PC-9 (cell line): ENCODE measurements at regions of chr15 and their contacts with region 1.

Region 1: DNA sequence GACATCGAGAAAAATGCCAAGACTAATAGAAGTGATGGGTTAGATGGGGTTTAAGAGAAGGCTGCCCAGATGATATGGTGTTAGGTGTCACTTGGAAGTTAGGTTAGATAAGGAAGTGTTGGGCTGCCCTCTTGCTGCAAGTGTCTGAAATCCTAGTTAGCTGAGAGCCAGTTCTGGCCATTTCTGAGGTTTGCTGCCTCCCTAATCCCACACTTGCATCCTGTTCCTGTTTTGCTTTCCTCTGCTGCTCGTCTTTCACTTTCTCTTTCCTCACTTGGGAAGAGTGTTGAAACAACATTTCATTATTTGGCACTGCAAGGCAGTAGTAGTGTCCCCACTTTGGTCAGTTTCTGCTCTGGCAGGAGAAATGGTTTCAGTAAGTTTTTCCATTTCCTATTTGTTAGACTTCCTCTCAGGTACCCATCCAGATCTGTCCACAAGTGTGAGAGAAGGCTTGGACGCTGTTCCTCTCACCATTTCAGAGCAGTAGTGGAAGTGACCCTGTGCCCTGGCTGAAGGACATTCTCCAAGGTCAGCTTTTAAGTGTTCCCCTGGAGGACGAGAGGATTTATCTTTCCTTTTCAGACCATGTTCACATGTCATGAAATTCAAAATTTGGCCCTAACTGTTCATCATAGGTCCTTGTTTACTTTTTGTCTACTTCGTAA is 93.3 kb downstream of the ADAMTSL3 start:
- DNase-seq: peak in 1 of 2 experiments; percentile 27
- H3K4me3 ChIP-seq: no peak overlapping the region
- H3K27ac ChIP-seq: no peak overlapping the region
- H3K4me1 ChIP-seq: peaks cover 5% of the 10 kb centered on the region; the same call in 1 of the 2 replicates
- H3K27me3 ChIP-seq: no peaks in the 10 kb centered on the region
- CTCF ChIP-seq: peak; percentile 51

Region 2: DNA sequence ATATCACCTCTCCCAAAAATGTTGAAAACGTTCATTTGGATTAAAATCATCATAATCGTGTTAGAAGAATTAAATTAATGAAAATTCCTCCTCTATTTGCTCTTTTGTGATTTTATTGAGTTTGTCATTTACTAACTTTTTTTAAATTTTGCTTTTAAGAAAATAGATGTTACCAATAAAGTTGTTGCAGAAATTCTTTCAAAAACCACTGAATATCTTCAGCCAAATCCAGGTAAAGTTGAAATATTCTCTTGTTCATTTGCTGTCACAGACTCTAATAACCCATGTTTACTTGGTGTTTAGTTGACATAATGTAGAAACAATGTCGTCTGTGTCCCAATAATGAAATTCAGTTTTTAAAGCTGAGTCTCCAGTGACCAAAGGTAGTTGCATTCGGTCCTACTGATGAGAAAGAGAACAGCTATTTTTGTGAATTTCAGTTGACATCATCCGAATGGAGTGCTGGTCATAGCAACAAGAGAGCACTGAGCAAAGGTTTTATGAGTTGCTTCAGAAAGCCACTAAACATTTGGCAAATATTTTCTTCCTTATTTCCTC is 182.1 kb before region 1 on chr15:
- CTCF ChIA-PET with region 1: interaction called, 6 read pairs
- POLR2A ChIA-PET with region 1: no interaction called
- intact Hi-C with region 1: loop called (anchors 1 kb)
- DNase-seq: peak in 1 of 2 experiments; percentile 37
- H3K4me3 ChIP-seq: no peak overlapping the region
- H3K27ac ChIP-seq: no peak overlapping the region
- H3K4me1 ChIP-seq: no peaks in the 10 kb centered on the region
- H3K27me3 ChIP-seq: no peaks in the 10 kb centered on the region
- CTCF ChIP-seq: no peak

Region 3: GRCh38 chr15:83653639-83654378 is 93.4 kb before region 1 on chr15 and contains the start of gene ADAMTSL3:
- CTCF ChIA-PET with region 1: no interaction called
- POLR2A ChIA-PET with region 1: no interaction called
- intact Hi-C with region 1: loop called (anchors 10 kb)
- DNase-seq: peak in 1 of 2 experiments; percentile 61
- H3K4me3 ChIP-seq: no peak within 1 kb of the TSS
- H3K27ac ChIP-seq: no peak within 1 kb of the TSS
- H3K4me1 ChIP-seq: no peaks in the 10 kb centered on the region
- H3K27me3 ChIP-seq: no peaks in the 10 kb centered on the region
- CTCF ChIP-seq: no peak
- total RNA-seq, gene ADAMTSL3: 3.2 and 5.0 TPM in 2 replicates

Region 4: GRCh38 chr15:83670672-83671229 is 76.4 kb before region 1 on chr15:
- CTCF ChIA-PET with region 1: interaction called, 14 read pairs
- POLR2A ChIA-PET with region 1: no interaction called
- intact Hi-C with region 1: no loop called
- DNase-seq: no peak
- H3K4me3 ChIP-seq: no peak overlapping the region
- H3K27ac ChIP-seq: no peak overlapping the region
- H3K4me1 ChIP-seq: no peaks in the 10 kb centered on the region
- H3K27me3 ChIP-seq: no peaks in the 10 kb centered on the region
- CTCF ChIP-seq: no peak

Region 5: GRCh38 chr15:83848315-83849050 is 101.3 kb after region 1 on chr15:
- CTCF ChIA-PET with region 1: no interaction called
- POLR2A ChIA-PET with region 1: no interaction called
- intact Hi-C with region 1: no loop called
- DNase-seq: no peak
- H3K4me3 ChIP-seq: no peak overlapping the region
- H3K27ac ChIP-seq: no peak overlapping the region
- H3K4me1 ChIP-seq: peaks cover 9% of the 10 kb centered on the region
- H3K27me3 ChIP-seq: no peaks in the 10 kb centered on the region
- CTCF ChIP-seq: no peak